Mammary epithelial cell (primary cell): ENCODE measurements at regions of chr3 and their contacts with region 1.

Region 1: DNA sequence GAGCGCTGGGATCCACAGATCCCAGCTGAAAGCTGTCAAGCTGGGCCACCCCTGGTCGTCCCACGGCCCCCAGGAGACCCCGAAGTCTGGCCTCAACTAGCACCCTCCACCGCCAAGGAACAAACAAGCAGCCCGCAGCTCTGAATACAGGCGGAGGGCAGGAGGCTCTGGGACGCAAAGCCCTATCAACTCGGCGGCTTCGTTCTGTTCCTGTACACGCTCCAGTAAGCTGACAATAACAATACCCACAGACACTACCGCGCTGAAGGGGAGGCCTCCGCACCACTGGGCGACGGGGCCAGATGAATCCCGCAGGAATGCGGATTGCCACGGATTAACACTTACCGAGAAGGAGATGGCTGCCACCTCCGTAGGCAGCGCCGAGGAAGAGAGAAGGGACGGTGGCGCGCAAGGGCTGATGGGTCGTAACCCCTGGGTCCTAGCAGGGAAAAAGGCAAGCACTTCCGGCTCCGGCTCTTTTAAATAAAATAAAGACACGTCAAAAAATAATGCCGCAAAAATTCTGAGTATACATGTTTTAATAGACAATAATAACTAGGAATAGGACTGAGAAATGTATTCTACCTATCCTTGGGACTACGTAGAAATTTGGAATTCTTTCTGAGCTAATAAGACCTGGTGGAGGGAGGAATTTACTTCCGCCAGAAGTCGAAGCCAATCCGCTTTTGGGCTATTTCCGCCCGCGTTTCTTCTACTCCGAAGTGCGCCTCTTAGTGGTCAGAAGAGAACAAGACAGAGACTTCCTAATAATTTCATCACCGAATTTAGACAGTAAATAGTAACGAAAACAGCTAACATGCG is at the start of gene RPL32:
- DNase-seq: peak; percentile 89
- H3K4me3 ChIP-seq: peak within 1 kb of the TSS; percentile 89 to 91 (median 89)
- H3K27ac ChIP-seq: peak within 1 kb of the TSS; percentile 97
- H3K4me1 ChIP-seq: peaks cover 26% of the 10 kb centered on the region
- H3K27me3 ChIP-seq: no peaks in the 10 kb centered on the region
- CTCF ChIP-seq: peak; percentile 73 to 91
- total RNA-seq, gene RPL32: 686 to 1,631 TPM

Region 2: DNA sequence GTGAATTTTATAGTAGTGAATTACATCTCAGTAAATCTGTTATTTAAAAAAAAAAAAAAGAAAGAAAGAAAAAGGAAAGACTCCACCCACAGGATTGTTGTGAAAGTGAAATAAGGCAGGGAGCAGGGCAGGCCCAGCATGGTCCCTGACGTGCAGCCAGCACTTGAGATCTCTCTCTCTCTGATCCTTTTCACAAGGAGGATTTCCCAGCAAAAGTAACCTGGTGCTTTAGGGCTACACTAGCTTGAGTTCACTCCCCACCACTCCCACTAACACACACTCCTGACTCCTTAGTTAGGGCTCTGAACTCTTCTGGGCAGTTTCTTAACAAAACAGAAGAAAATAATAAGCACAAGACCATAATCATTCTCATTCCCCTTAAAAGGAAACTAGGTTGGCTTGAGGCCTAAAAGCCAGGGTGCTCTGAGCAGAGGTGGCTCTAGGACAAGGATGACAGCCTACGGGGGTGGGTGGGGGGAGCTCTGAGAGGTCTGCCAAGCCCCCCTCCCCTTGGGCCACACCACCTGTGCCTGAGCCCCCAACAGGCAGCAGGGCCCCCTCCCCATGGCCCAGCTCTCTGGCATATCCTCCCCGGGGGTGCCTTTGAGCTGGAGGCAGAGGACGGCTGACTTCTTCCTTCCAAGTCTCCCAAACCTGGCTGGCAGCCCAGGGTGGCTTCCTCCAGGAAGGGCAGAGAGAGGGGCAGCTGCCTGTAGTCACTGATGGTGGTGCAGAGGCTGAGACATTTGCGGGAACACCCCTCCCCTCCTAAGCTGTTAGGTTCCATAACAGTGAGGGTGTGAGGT is 83.1 kb before region 1 on chr3:
- CTCF ChIA-PET with region 1: interaction called, 5 read pairs
- dilution Hi-C with region 1: no loop called
- in situ Hi-C with region 1: no loop called
- intact Hi-C with region 1: loop called (anchors 1 kb)
- DNase-seq: peak; percentile 46
- H3K4me3 ChIP-seq: peak overlapping the region; percentile 58 to 69 (median 65)
- H3K27ac ChIP-seq: peak overlapping the region; percentile 68
- H3K4me1 ChIP-seq: peaks cover 68% of the 10 kb centered on the region
- H3K27me3 ChIP-seq: no peaks in the 10 kb centered on the region
- CTCF ChIP-seq: no peak